Activated CD4-positive, alpha-beta memory T cell treated with anti-CD3 and anti-CD28 coated beads for 36 hours (primary cell): ENCODE measurements at regions of chr21 and their contacts with region 1.

Region 1: DNA sequence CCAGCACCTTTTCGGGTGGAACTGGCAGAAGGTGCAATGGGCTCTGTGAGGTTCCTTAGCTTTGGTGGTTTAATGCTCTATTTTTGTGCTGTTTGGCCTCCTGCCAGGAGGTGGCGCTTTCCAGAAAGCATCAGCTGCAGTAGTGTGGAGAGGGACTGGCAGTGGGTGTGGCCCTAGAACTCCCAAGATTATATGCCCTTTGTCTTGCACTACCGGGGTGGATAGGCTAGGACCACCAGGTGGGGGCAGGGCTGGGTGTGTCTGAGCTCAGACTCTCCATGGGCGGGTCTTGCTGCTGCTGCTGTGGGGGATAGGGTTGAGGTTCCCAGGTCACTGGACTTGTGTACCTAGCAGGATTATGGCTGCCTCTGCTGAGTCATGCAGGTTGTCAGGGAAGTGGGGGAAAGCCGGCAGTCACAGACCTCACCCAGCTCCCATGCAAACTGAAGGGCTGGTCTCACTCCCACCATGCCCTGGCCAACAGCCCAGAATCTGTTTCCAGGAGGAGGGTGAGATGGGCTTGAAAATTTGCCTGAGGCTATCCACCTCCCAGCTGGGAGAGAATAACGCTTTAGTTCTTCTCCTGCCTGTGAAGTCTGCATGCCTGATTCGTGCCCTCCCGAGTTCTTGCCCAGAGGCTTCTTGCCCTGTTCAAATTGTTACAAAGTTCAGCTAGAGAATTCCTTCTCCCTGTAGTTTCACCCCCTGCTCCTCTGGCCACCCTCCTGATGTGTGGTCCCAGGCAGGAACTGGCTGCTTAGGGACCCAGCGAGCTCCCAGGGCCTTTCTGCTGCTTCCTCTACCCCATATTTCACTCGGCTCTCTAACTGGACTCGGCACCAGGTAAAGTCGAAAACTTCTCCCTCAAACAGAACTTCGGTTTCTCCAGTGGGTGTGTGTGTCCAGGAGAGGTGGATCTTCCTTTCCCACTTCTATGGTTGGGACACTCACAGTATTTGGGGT is 76.5 kb upstream of the BTG3 start:
- DNase-seq: peak; percentile 71
- H3K4me3 Mint-ChIP-seq: no peak overlapping the region
- H3K27ac Mint-ChIP-seq: no peak overlapping the region
- H3K4me1 Mint-ChIP-seq: peaks cover 32% of the 10 kb centered on the region
- H3K27me3 Mint-ChIP-seq: no peaks in the 10 kb centered on the region

Region 2: GRCh38 chr21:17576080-17576835 is 112.9 kb before region 1 on chr21:
- CTCF ChIA-PET with region 1: no interaction called
- POLR2A ChIA-PET with region 1: no interaction called
- intact Hi-C with region 1: no loop called
- DNase-seq: no peak
- H3K4me3 Mint-ChIP-seq: no peak overlapping the region
- H3K27ac Mint-ChIP-seq: no peak overlapping the region
- H3K4me1 Mint-ChIP-seq: no peaks in the 10 kb centered on the region
- H3K27me3 Mint-ChIP-seq: peaks cover 4% of the 10 kb centered on the region

Region 3: DNA sequence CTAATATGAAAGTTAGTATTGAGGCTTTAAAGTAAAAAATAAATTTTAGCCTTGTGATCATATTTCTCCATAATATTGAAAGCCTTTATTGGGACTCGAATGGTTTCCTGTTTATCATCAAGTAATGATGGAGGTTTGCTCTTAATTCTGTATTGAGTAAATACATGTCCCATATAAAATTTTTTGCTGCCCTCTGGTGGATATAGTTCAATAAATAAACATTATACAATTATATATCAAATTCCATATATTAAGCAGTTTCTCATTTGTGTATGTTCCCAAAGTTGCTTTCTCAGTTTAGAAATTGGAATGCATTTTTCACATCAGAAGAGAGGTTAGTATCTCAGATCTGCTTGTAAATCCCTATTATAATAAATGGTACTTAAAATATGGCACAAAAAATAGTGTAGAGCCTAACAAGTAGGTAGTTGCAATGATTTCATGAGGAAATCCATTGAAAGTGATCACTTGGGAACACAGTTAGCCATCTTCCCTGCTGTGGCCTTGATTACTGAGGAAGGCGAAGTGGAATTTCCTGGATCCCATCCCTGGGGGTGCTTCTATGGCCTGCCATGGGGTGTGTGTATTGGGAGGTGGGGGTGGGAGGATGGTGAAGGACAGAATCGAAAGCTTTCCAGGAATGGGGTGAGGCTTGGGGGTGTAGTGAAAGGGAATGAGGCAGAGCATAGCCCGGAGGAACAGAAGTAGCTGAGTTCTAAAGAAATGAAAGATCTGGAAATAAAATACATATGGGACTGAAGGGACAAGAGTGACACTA is 214.0 kb after region 1 on chr21:
- CTCF ChIA-PET with region 1: interaction called, 16 read pairs
- POLR2A ChIA-PET with region 1: no interaction called
- intact Hi-C with region 1: no loop called
- DNase-seq: no peak
- H3K4me3 Mint-ChIP-seq: no peak overlapping the region
- H3K27ac Mint-ChIP-seq: no peak overlapping the region
- H3K4me1 Mint-ChIP-seq: peaks cover 6% of the 10 kb centered on the region
- H3K27me3 Mint-ChIP-seq: no peaks in the 10 kb centered on the region